ENCODE measurements at regions of chr1 and their contacts with region 1.

Region 1: DNA sequence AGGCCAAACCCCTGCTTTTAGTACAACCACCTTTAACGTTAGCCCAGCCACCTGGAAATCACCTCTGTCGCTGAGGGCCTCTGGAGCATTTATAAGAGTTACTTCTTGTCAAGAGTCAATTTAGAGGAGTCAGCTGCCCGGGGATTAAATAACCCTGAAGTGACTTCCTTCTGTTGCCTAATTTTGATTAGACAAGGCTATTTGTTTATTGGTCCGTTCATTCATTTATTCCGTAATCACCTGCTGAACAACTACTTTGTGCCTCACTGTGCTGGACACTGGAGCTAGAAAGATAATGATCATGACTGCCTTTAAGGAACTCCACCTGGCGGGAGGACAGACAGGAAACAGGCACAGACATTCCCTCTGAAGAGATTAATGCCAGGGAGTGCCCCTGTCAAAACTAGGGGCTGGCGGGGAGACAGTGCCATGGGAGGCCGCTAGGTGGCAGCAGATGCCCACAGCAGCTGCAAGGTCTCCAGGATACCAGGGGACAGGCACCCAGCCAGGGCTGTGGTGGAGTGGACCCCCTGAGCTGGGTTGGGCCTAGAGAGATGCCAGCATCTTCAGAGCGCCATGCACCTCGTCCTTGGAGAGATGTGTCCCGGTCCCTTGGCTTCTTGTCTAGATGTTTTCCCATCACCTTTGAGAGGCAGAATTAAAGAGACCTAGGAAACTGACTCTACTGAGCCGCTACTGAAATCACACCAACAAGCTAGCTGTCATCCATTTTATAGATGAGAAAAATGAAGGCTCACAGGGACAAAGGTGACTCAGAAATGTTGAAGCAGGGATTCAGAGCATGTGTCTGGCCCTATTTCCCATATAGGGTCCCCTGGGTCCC is 3.7 kb downstream of the REN start:
- DNase-seq: peak; percentile 88
- ATAC-seq: peak; percentile 96

Region 2: GRCh38 chr1:203777274-203778005 is 385.0 kb before region 1 on chr1:
- intact Hi-C with region 1: no loop called
- DNase-seq: no peak
- ATAC-seq: no peak

Region 3: DNA sequence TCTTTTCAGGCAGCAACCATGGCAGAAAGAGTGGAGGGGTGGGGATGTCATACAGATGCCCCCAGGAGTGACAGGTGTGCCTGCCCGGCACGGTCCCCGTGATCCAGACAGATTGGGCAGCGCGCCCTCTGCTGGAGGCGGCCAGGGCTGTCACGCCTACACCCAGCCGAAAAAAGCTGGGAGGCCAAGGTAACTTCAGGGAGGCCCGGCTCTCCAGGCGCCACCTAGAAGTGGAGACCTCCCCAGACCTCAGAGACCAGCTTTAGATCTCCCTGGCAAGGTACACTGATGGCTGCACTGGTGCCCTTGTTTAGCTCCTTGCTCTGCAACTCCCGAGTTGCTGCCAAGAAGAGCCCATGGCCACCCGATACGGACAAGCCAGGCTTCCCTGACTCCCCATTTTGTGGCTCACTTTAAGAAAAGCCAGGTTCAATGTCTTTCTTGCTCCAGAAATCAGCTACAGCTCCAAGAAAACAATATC is 44.7 kb after region 1 on chr1:
- intact Hi-C with region 1: loop called (anchors 5 kb)
- DNase-seq: peak; percentile 80
- ATAC-seq: peak; percentile 95